ENCODE measurements at regions of chr17 and their contacts with region 1.

Region 1: DNA sequence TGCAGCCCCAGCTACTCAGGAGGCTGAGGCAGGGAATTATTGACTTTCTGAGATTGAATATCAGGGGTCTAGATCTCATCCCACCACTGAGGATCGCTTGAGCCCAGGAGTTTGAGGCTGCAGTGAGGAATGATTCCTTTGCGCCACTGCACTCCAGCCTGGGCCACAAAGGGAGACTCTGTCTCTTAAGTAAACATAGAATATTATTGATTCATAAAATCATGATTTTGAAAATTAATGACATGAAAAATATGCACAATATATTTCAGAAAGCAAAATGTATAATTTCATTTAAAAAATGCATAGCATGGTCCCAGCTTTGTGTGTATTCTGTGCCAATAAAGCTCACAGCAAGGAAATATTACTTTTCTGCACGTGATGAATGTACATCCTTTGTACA is 1.6 kb upstream of the VPS53 start:
- DNase-seq: no peak
- ATAC-seq: no peak
- H3K4me3 ChIP-seq: no peak overlapping the region
- H3K27ac ChIP-seq: no peak overlapping the region
- H3K4me1 ChIP-seq: no peaks in the 10 kb centered on the region
- H3K27me3 ChIP-seq: no peaks in the 10 kb centered on the region

Region 2: GRCh38 chr17:673200-673681 is 43.0 kb before region 1 on chr17:
- intact Hi-C with region 1: no loop called
- DNase-seq: no peak
- ATAC-seq: no peak
- H3K4me3 ChIP-seq: no peak overlapping the region
- H3K27ac ChIP-seq: no peak overlapping the region
- H3K4me1 ChIP-seq: no peaks in the 10 kb centered on the region
- H3K27me3 ChIP-seq: no peaks in the 10 kb centered on the region

Region 3: DNA sequence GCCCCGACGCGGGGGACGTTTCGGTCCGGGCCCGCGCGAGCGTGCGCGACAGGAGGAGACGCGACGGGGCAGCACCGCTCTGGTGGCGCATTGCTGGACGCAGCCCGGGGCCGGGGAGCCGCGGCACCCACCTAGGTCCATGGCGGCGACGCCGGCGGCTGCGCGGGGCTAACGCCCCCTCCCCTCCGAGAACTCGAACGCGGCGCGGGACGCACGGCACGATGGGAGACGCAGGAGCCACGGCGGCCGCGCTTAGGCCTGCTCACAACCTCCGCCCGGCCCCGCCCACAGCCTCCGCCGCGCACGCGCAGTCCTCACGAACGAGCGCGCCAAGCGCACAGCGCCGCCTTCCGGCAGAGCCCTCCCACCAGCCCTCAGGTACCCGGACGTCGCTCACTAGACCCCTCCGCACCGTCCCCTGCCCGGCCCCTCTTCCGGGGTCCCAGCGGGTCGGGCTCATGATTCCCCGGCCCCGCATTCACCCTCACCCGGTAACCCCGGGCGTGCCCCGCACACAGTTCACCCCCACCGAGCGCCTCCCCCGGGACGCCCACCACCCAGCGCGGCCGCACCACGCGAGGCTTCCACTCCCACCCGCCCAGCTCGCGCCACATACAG is 35.9 kb after region 1 on chr17 and contains the start of gene GEMIN4:
- intact Hi-C with region 1: loop called in 1 of 2 experiments (anchors 1 kb)
- DNase-seq: peak; percentile 94 to 99
- ATAC-seq: peak; percentile 97
- H3K4me3 ChIP-seq: peak within 1 kb of the TSS; percentile 42 to 81
- H3K27ac ChIP-seq: peak within 1 kb of the TSS in 1 of 2 donors; percentile 8
- H3K4me1 ChIP-seq: peaks cover 0 to 4% of the 10 kb centered on the region in 2 donors
- H3K27me3 ChIP-seq: no peaks in the 10 kb centered on the region
- total RNA-seq, gene GEMIN4: 11.7 to 17.2 TPM

Measured in aorta (tissue), 5 donors.